WTC11 (cell line): ENCODE measurements at regions of chr15 and their contacts with region 1.

Region 1: GRCh38 chr15:91055548-91056331 is 33.3 kb upstream of the VPS33B start:
- DNase-seq: peak; percentile 74
- ATAC-seq: peak; percentile 98
- H3K4me3 Mint-ChIP-seq: peak overlapping the region; percentile 16; the same call in 1 of the 2 replicates
- H3K27ac Mint-ChIP-seq: no peak overlapping the region
- H3K4me1 Mint-ChIP-seq: peaks cover 2% of the 10 kb centered on the region; the same call in 1 of the 2 replicates
- H3K27me3 Mint-ChIP-seq: peaks cover 8% of the 10 kb centered on the region
- CTCF ChIP-seq: peak; percentile 46; the same call in 1 of the 2 replicates

Region 2: GRCh38 chr15:90829942-90830440 is 225.7 kb before region 1 on chr15:
- CTCF ChIA-PET with region 1: no interaction called
- POLR2A ChIA-PET with region 1: no interaction called
- DNase-seq: no peak
- ATAC-seq: no peak
- H3K4me3 Mint-ChIP-seq: no peak overlapping the region
- H3K27ac Mint-ChIP-seq: no peak overlapping the region
- H3K4me1 Mint-ChIP-seq: peaks cover 16% of the 10 kb centered on the region
- H3K27me3 Mint-ChIP-seq: no peaks in the 10 kb centered on the region
- CTCF ChIP-seq: no peak

Region 3: GRCh38 chr15:90915808-90916440 is 139.8 kb before region 1 on chr15:
- CTCF ChIA-PET with region 1: no interaction called
- POLR2A ChIA-PET with region 1: no interaction called
- DNase-seq: no peak
- ATAC-seq: peak; percentile 30
- H3K4me3 Mint-ChIP-seq: no peak overlapping the region
- H3K27ac Mint-ChIP-seq: peak overlapping the region; percentile 36
- H3K4me1 Mint-ChIP-seq: no peaks in the 10 kb centered on the region
- H3K27me3 Mint-ChIP-seq: no peaks in the 10 kb centered on the region; the same call in 1 of the 2 replicates
- CTCF ChIP-seq: no peak

Region 4: DNA sequence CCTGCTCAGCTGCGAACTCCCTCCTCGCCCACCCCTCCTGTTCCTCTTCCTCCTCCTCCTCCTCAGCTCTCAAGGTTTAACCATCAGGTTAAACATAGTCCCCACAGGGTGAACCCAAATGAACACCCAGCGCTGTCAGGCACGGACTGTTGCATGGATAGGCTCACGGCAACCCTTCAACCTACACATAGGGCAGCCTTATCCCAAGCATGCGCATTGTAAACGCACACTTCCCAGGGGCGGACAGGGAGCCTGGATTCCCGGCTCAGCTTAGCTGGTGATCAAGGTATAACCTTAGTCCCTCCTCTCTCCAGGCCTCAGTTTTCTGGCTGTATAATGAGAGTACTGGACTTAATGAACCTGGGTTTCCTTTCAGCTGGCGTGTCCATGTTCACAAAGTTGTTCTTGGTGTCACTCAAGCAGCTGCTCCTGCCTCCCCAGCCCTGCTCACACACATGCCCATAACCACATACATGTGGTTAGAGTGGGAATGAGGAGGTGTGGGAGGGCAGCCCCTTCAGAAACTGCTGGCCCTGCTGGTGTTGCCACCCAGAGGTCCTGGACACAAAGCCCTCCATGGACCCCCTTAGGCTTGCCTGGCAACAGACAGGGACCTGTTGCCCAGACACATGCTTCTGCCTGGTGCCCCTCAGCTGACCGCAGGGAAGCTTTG is 12.4 kb before region 1 on chr15:
- CTCF ChIA-PET with region 1: no interaction called
- POLR2A ChIA-PET with region 1: no interaction called
- DNase-seq: no peak
- ATAC-seq: peak; percentile 46
- H3K4me3 Mint-ChIP-seq: no peak overlapping the region
- H3K27ac Mint-ChIP-seq: no peak overlapping the region
- H3K4me1 Mint-ChIP-seq: 0 out of 2 replicates have a peak, but pooled peaks cover 2% of the 10 kb centered on the region
- H3K27me3 Mint-ChIP-seq: no peaks in the 10 kb centered on the region; the same call in 1 of the 2 replicates
- CTCF ChIP-seq: no peak

Region 5: DNA sequence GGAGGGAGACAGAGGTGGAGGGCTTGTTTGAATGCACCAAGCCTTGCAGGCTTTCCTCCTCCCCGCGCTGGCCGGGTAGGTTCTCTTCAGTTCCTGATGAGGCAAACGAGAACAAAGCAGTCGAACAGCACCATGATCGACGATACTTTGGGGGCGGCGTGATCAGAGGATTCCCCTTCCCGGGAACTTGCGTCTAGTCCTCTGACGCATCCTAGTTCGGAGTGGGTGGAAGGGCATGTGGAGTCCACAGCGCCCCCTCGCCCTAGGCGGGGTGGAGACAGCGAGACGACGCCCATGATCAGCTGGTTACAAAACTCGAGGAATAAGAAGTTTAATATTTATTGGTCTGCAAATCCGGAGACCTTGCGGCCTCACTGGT is 43.9 kb after region 1 on chr15:
- CTCF ChIA-PET with region 1: interaction called, 10 read pairs
- POLR2A ChIA-PET with region 1: no interaction called
- DNase-seq: peak; percentile 64
- ATAC-seq: peak; percentile 67
- H3K4me3 Mint-ChIP-seq: peak overlapping the region; percentile 77
- H3K27ac Mint-ChIP-seq: no peak overlapping the region
- H3K4me1 Mint-ChIP-seq: peaks cover 18% of the 10 kb centered on the region
- H3K27me3 Mint-ChIP-seq: peaks cover 84% of the 10 kb centered on the region
- CTCF ChIP-seq: no peak

Region 6: GRCh38 chr15:91158415-91159394 is 103.0 kb after region 1 on chr15:
- CTCF ChIA-PET with region 1: no interaction called
- POLR2A ChIA-PET with region 1: no interaction called
- DNase-seq: no peak
- ATAC-seq: no peak
- H3K4me3 Mint-ChIP-seq: no peak overlapping the region
- H3K27ac Mint-ChIP-seq: no peak overlapping the region
- H3K4me1 Mint-ChIP-seq: peaks cover 10% of the 10 kb centered on the region
- H3K27me3 Mint-ChIP-seq: no peaks in the 10 kb centered on the region; the same call in 1 of the 2 replicates
- CTCF ChIP-seq: no peak

Region 7: DNA sequence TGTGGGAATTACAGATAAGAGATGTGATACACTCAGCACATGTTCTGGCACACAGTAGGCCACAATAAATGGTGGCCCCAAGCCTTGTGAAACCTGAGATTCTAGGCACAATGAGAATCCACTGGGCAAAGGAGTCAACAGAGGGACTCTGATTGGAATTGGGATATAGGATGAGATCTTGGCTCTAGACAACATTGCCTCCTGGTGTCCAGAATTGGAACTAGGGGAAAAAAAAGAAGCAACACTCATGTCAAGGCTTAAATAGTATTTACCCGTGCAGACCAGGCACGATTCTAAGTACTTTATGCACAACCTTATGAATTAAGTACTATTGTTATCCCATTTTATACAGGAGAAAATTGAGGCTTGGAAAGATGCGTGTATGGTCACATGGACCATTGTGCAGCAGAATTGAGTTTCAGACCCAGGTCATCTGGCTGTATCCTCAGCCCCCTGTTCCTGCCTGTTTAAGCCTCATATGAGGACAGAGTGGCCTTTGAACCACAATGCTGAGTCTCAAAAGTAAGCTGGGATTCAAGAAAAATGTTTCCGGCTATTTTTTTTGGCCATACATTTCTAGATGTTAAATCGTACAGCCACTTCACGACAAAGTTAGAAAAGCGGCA is 169.1 kb after region 1 on chr15:
- CTCF ChIA-PET with region 1: interaction called, 18 read pairs
- POLR2A ChIA-PET with region 1: no interaction called
- DNase-seq: no peak
- ATAC-seq: peak; percentile 89
- H3K4me3 Mint-ChIP-seq: no peak overlapping the region
- H3K27ac Mint-ChIP-seq: no peak overlapping the region
- H3K4me1 Mint-ChIP-seq: peaks cover 16% of the 10 kb centered on the region
- H3K27me3 Mint-ChIP-seq: no peaks in the 10 kb centered on the region
- CTCF ChIP-seq: peak; percentile 68

Region 8: GRCh38 chr15:91258425-91258779 is 202.7 kb after region 1 on chr15:
- CTCF ChIA-PET with region 1: interaction called, 13 read pairs
- POLR2A ChIA-PET with region 1: no interaction called
- DNase-seq: peak; percentile 18
- ATAC-seq: peak; percentile 91
- H3K4me3 Mint-ChIP-seq: no peak overlapping the region
- H3K27ac Mint-ChIP-seq: no peak overlapping the region
- H3K4me1 Mint-ChIP-seq: no peaks in the 10 kb centered on the region
- H3K27me3 Mint-ChIP-seq: no peaks in the 10 kb centered on the region
- CTCF ChIP-seq: no peak